Activated CD8-positive, alpha-beta T cell treated with anti-CD3 and anti-CD28 coated beads, Interleukin-2, amount 10 ng/mL, durations not matched to agents 7 days and 5 days (primary cell): ENCODE measurements at regions of chrX and their contacts with region 1.

Region 1: GRCh38 chrX:129726307-129727111 is 12.3 kb upstream of the XPNPEP2 start:
- DNase-seq: no peak
- ATAC-seq: no peak
- H3K4me3 Mint-ChIP-seq: no peak overlapping the region
- H3K27ac Mint-ChIP-seq: no peak overlapping the region
- H3K4me1 Mint-ChIP-seq: peaks cover 43% of the 10 kb centered on the region
- H3K27me3 Mint-ChIP-seq: no peaks in the 10 kb centered on the region

Region 2: GRCh38 chrX:129606918-129607317 is 119.6 kb before region 1 on chrX:
- CTCF ChIA-PET with region 1: interaction called, 28 read pairs
- POLR2A ChIA-PET with region 1: no interaction called
- DNase-seq: peak; percentile 69
- ATAC-seq: peak; percentile 48
- H3K4me3 Mint-ChIP-seq: no peak overlapping the region
- H3K27ac Mint-ChIP-seq: no peak overlapping the region
- H3K4me1 Mint-ChIP-seq: peaks cover 22% of the 10 kb centered on the region
- H3K27me3 Mint-ChIP-seq: peaks cover 7% of the 10 kb centered on the region

Region 3: GRCh38 chrX:129737916-129738315 is 11.4 kb after region 1 on chrX:
- CTCF ChIA-PET with region 1: interaction called, 30 read pairs
- POLR2A ChIA-PET with region 1: interaction called, 3 read pairs
- DNase-seq: no peak
- ATAC-seq: no peak
- H3K4me3 Mint-ChIP-seq: no peak overlapping the region
- H3K27ac Mint-ChIP-seq: peak overlapping the region; percentile 46
- H3K4me1 Mint-ChIP-seq: peaks cover 57% of the 10 kb centered on the region
- H3K27me3 Mint-ChIP-seq: no peaks in the 10 kb centered on the region

Region 4: GRCh38 chrX:129744861-129745321 is 18.4 kb after region 1 on chrX:
- CTCF ChIA-PET with region 1: interaction called, 10 read pairs
- POLR2A ChIA-PET with region 1: no interaction called
- DNase-seq: peak; percentile 84
- ATAC-seq: peak; percentile 76
- H3K4me3 Mint-ChIP-seq: peak overlapping the region; percentile 58
- H3K27ac Mint-ChIP-seq: peak overlapping the region; percentile 96
- H3K4me1 Mint-ChIP-seq: peaks cover 63% of the 10 kb centered on the region
- H3K27me3 Mint-ChIP-seq: no peaks in the 10 kb centered on the region

Region 5: GRCh38 chrX:129843459-129844306 is 117.2 kb after region 1 on chrX and contains the start of gene ZDHHC9:
- CTCF ChIA-PET with region 1: no interaction called
- POLR2A ChIA-PET with region 1: no interaction called
- DNase-seq: peak; percentile 89
- ATAC-seq: peak; percentile 99
- H3K4me3 Mint-ChIP-seq: peak within 1 kb of the TSS; percentile 91
- H3K27ac Mint-ChIP-seq: peak within 1 kb of the TSS; percentile 77
- H3K4me1 Mint-ChIP-seq: peaks cover 21% of the 10 kb centered on the region
- H3K27me3 Mint-ChIP-seq: no peaks in the 10 kb centered on the region
- total RNA-seq, gene ZDHHC9: 4.7 to 5.4 TPM